H1 (cell line): ENCODE measurements at regions of chr21 and their contacts with region 1.

Region 1: DNA sequence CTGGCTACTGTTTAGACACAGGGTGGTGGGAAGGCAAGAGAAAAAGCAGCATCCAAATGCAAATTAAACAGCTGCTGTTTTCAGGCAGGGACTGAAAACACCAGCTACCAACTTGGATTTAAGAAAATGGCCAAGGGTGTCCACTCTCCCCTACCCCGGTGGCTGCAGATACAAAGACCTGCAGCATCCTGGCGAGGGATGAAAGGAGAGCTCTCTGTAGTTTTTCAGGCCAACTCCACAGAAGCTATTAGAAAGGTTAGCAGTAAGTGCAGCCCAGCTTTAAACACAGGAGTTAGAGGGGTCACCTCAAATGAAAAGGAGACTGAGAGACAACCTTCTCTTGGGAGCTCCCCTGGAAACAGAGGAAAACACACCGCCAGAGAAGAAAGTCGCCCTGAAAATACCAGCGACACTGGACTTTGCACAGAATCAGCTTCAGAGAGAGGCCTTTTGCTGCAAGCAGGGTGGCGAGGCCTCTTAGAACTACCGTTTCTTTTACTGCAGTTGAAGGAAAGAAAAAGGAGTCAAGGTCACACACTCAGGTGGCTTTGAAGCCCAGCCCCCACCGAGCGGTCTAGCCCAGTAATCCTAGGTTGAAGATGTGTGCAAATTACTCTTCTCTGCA is 74.4 kb upstream of the TIAM1 start:
- DNase-seq: no peak
- H3K4me3 ChIP-seq: no peak overlapping the region
- H3K27ac ChIP-seq: no peak overlapping the region
- H3K4me1 ChIP-seq: no peaks in the 10 kb centered on the region
- H3K27me3 ChIP-seq: no peaks in the 10 kb centered on the region
- CTCF ChIP-seq: no peak
- EP300 ChIP-seq: no peak
- POLR2A ChIP-seq: no peak
- RAD21 ChIP-seq: no peak

Region 2: GRCh38 chr21:31387560-31388186 is 30.8 kb before region 1 on chr21:
- CTCF ChIA-PET with region 1: no interaction called
- POLR2A ChIA-PET with region 1: no interaction called
- DNase-seq: no peak
- H3K4me3 ChIP-seq: no peak overlapping the region
- H3K27ac ChIP-seq: no peak overlapping the region
- H3K4me1 ChIP-seq: peaks cover 0 to 6% (median 0%) of the 10 kb centered on the region in 4 experiments; a peak in 3 of 7 replicates
- H3K27me3 ChIP-seq: no peaks in the 10 kb centered on the region
- CTCF ChIP-seq: no peak
- EP300 ChIP-seq: no peak
- POLR2A ChIP-seq: no peak
- RAD21 ChIP-seq: no peak

Region 3: DNA sequence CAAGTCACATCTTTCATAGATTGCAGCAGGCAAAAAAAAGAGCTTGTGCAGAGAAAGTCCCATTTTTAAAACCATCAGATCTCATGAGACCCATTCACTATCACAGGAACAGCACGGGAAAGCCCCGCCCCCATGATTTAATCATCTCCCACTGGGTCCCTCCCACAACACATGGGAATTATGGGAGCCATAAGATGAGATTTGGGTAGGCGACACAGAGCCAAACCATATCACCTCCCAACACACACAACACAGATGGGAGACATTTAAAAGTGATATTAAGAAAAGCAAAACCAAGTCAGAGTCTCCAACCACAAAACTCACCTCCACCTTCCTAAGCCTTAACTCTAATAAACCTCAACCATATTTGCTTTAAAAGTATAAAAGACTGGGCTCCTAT is 12.9 kb before region 1 on chr21:
- CTCF ChIA-PET with region 1: interaction called, 11 read pairs
- POLR2A ChIA-PET with region 1: no interaction called
- DNase-seq: no peak
- H3K4me3 ChIP-seq: no peak overlapping the region
- H3K27ac ChIP-seq: no peak overlapping the region
- H3K4me1 ChIP-seq: no peaks in the 10 kb centered on the region
- H3K27me3 ChIP-seq: no peaks in the 10 kb centered on the region
- CTCF ChIP-seq: no peak
- EP300 ChIP-seq: no peak
- POLR2A ChIP-seq: no peak
- RAD21 ChIP-seq: no peak